H1 (cell line): ENCODE measurements at regions of chr1 and their contacts with region 1.

Region 1: GRCh38 chr1:81681586-81682266 is 119.0 kb upstream of the ADGRL2 start:
- DNase-seq: no peak
- H3K4me3 ChIP-seq: no peak overlapping the region; a peak in 1 of 8 replicates
- H3K27ac ChIP-seq: peak overlapping the region; percentile 30; the same call in 1 of the 2 replicates
- H3K4me1 ChIP-seq: peaks cover 5 to 27% (median 15%) of the 10 kb centered on the region in 4 experiments; a peak in 4 of 7 replicates
- H3K27me3 ChIP-seq: no peaks in the 10 kb centered on the region
- CTCF ChIP-seq: no peak
- EP300 ChIP-seq: no peak
- POLR2A ChIP-seq: no peak
- RAD21 ChIP-seq: no peak

Region 2: DNA sequence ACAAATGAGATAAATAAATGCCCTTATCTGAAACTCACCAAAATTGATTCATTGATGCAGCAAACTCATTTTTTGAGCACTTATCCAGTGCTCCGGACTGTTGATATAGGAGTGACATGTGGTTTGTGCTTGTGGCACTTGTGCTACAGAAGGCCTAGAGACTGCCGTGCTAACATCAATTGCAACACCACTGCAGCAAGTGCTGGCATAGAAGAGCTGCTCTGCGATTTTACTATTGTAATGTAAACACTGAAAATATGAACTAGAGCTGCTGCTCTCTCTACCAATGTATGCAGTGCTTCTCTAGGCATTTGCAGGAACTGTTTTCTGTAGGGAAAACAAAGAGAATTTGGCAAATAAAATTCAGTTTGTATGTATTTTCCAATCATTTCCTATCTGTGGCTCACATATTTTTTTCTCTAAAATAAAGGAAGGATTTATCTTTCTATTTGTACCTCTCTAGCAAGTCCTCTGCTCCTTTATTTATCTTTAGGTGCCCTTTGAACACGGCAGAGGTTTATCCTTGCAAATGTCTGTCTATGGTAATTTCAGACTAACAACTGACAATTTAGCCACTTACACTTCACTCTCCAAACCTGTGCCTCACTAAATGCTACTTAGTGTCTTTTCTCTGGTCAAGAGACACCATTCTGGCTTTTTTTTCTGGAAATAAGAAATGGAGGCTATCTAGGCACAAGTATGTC is 290.4 kb before region 1 on chr1:
- CTCF ChIA-PET with region 1: no interaction called
- POLR2A ChIA-PET with region 1: no interaction called
- DNase-seq: no peak
- H3K4me3 ChIP-seq: no peak overlapping the region
- H3K27ac ChIP-seq: no peak overlapping the region
- H3K4me1 ChIP-seq: no peaks in the 10 kb centered on the region
- H3K27me3 ChIP-seq: no peaks in the 10 kb centered on the region
- CTCF ChIP-seq: no peak
- EP300 ChIP-seq: no peak
- POLR2A ChIP-seq: no peak
- RAD21 ChIP-seq: no peak

Region 3: DNA sequence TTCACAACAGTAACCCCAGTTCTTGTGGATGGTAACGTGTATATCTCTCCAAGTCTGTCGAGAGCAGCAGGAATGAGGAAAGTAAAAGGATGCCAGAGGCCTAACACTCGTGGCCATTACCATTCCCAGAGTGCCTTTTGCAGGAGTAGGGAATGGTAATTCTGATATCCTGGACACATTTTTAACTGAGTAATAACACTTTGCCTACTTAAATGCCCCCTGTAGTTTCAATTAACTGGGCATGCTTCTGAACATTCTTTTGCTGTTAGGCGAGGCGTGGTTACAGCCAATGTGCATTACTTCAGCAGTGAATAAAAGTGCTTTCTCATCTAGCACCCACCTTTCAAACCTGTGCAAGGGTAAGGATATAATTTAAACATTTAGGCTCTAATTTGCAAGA is 139.5 kb before region 1 on chr1:
- CTCF ChIA-PET with region 1: no interaction called
- POLR2A ChIA-PET with region 1: no interaction called
- DNase-seq: no peak
- H3K4me3 ChIP-seq: no peak overlapping the region
- H3K27ac ChIP-seq: no peak overlapping the region
- H3K4me1 ChIP-seq: peaks cover 0 to 11% (median 5%) of the 10 kb centered on the region in 4 experiments
- H3K27me3 ChIP-seq: no peaks in the 10 kb centered on the region
- CTCF ChIP-seq: no peak
- EP300 ChIP-seq: no peak
- POLR2A ChIP-seq: no peak
- RAD21 ChIP-seq: no peak

Region 4: DNA sequence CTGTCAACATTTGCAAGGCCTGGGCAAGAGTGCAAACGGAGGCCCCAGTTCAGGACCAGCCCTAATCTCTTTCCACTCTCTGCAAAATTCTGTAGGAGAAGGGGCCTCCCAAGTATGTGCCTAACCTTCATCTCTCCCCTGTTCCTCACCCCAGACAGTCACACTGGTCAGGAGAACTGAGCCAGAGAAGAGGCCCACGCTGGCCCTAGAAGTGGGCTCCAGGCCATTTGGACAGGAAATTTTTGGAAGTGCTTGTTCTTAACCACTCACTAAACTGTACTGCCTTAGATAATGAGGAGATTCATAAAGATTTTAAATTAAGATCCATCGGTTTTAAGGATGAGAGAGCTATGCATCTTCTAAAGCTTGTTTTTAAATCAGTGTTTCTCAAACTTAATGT is 10.7 kb before region 1 on chr1:
- CTCF ChIA-PET with region 1: no interaction called
- POLR2A ChIA-PET with region 1: interaction called, 10 read pairs
- DNase-seq: no peak
- H3K4me3 ChIP-seq: no peak overlapping the region
- H3K27ac ChIP-seq: no peak overlapping the region
- H3K4me1 ChIP-seq: peaks cover 0 to 9% (median 2%) of the 10 kb centered on the region in 4 experiments; a peak in 3 of 7 replicates
- H3K27me3 ChIP-seq: no peaks in the 10 kb centered on the region
- CTCF ChIP-seq: no peak
- EP300 ChIP-seq: no peak
- POLR2A ChIP-seq: no peak
- RAD21 ChIP-seq: no peak